GM10248 (cell line): ENCODE measurements at regions of chr16 and their contacts with region 1.

Region 1: DNA sequence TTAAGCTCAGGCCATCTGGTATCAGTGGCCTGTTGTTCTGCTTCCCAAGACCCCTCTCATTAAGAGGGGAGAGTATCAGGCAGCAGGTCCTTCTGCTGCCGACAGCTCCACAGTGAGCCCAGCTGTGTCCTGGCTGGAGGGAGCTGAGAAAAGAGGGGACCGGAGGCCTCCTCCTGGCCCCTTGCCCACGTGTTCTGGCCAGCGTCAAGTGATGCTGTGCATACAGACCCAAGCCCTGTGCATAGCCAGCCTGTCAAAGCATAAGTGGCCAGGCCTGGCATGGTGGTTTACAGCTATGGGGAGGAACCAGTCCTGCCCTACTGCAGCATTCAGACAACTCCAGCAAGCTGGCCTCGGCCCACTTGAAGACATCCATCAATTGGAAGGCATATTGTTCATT is 48.0 kb downstream of the ABCC6 start:
- DNase-seq: no peak
- CTCF ChIP-seq: no peak

Region 2: DNA sequence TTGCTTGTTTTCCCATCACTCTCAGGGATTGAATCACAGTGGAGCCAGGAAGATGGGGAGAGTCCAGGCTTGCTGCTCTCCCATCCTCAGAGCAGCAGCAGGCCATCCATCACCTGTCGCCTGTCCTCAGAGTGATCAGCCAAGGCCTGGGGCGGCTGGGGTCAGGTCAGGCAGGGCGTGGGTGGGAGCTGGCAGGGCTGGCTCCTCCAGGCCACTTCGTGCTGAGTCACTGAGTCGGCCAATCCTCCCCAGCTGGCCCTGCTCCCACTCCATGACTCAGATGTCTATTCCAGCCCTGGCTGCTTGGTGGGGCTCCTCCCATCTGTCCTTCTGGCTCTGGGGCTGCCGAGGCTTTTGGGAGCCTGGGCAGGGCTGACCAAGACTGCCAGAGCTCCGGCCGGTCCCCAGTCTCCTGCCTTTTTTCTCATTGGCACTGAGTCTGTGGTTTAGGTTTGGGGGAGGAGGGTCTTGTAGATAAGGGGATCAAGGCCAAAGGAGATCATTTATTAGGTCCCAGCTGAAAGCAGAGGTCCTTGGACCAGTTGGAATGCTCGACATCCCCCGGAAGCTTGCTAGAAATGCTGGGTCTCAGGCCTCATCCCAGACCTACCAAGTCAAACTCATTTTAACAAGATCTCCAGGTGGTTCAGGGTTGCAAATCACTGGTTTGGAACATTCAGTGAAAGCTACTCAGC is 153.2 kb before region 1 on chr16:
- CTCF ChIA-PET with region 1: no interaction called
- POLR2A ChIA-PET with region 1: no interaction called
- DNase-seq: no peak
- CTCF ChIP-seq: no peak

Region 3: DNA sequence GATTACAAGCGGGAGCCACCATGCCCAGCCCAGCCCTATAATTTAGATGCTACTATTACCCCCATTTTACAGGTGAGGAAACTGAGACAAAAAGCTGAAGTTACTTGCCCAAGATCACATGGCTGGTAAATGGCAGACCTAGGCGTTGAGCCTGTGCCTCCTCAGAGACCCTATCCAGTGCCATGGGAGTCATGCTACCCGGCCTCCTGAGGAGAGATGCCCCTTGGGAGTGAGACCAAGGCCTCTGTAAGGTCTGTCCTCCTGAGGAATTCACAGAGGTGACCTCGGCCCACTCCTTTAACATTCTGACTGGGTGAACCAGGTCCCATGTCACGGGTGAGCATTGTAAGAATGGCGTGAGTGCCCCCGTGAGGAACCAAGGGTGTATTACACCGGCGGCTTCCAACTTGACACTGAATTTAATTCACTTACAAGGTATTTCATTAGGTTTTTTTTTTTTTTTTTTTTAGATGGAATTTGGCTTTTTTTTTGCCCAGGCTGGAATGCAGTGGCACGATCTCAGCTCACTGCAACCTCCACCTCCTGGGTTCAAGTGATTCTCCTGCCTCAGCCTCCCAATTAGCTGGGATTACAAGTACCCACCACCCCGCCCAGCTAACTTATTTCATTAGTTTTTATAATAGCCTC is 47.7 kb before region 1 on chr16:
- CTCF ChIA-PET with region 1: no interaction called
- POLR2A ChIA-PET with region 1: no interaction called
- DNase-seq: peak; percentile 79
- CTCF ChIP-seq: peak; percentile 77

Region 4: DNA sequence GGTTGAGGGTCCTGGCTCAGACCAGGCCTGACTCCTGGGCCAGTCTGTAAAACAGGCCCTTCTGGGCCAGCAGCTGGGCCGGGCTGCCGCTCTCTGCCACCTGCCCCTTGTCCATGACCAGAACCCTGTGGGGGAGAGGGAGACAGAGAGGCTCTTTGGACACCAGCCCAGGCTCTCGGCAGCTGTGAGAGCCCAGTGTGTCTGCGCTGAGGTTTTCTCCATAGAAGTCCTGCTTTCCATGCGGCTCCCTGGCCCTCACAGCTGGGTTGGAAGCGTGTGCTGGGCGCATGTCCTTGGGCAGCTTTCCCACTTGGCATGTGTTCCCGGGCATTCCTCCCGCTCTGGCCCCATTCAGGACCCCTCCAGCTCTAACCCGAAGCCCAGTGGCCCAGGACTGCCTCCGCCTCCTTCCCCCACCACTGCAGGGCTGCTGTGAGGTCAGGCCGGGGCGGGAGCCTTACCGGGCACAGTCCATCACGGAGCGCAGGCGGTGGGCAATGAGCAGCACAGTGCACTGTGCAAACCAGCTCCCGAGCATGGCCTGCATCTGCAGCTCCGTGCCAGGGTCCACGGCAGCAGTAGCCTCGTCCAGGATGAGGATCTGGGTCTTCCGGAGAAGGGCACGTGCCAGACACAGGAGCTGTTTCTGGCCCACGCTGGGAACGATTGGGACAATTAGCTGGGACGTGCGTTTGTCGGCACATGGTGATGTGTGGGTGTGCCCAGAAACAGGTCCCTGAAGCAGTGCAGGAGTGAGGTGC is 25.0 kb before region 1 on chr16:
- CTCF ChIA-PET with region 1: no interaction called
- POLR2A ChIA-PET with region 1: no interaction called
- DNase-seq: no peak
- CTCF ChIP-seq: no peak

Region 5: GRCh38 chr16:16188827-16189226 is 13.5 kb after region 1 on chr16:
- CTCF ChIA-PET with region 1: interaction called, 27 read pairs
- POLR2A ChIA-PET with region 1: no interaction called
- DNase-seq: no peak
- CTCF ChIP-seq: no peak